ENCODE measurements at regions of chr3 and their contacts with region 1.

Region 1: GRCh38 chr3:187139126-187139894 is at the start of gene RPL39L:
- DNase-seq: peak; percentile 92
- H3K4me3 Mint-ChIP-seq: peak within 1 kb of the TSS; percentile 82
- H3K27ac Mint-ChIP-seq: peak within 1 kb of the TSS; percentile 96
- H3K4me1 Mint-ChIP-seq: peaks cover 26% of the 10 kb centered on the region
- H3K27me3 Mint-ChIP-seq: no peaks in the 10 kb centered on the region
- total RNA-seq, gene RPL39L: 18.4 to 20.4 TPM

Region 2: DNA sequence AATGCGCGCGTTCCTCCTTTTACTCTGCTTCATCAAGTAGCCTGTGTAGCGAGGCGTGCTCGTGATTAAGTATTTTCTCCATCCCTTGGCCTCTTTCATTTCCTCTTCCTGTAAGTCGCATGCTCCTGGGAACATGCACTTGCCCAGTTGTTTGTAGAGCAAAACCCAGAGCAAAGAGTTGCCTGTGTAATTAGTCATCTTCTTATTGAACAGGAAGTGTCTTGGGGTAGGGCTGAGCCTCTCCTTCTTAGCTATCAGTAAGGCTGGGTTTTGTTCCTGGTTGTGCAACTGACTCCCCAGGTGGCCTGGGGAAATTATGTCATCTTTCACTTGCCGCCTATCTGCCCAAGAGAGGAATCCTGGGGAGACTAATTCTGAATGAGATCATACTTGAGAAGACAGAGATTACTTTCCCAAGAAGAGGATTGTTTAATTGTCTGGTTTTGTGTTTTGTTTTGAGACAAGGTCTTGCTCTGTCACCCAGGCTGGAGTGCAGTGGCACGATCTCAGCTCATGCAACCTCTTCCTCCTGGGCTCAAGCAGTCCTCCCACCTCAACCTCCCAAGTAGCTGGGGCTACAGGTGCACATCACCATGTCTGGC is 1601.8 kb before region 1 on chr3:
- CTCF ChIA-PET with region 1: no interaction called
- POLR2A ChIA-PET with region 1: no interaction called
- DNase-seq: peak; percentile 40
- H3K4me3 Mint-ChIP-seq: peak overlapping the region; percentile 1
- H3K27ac Mint-ChIP-seq: peak overlapping the region; percentile 85
- H3K4me1 Mint-ChIP-seq: peaks cover 16% of the 10 kb centered on the region
- H3K27me3 Mint-ChIP-seq: no peaks in the 10 kb centered on the region

Region 3: DNA sequence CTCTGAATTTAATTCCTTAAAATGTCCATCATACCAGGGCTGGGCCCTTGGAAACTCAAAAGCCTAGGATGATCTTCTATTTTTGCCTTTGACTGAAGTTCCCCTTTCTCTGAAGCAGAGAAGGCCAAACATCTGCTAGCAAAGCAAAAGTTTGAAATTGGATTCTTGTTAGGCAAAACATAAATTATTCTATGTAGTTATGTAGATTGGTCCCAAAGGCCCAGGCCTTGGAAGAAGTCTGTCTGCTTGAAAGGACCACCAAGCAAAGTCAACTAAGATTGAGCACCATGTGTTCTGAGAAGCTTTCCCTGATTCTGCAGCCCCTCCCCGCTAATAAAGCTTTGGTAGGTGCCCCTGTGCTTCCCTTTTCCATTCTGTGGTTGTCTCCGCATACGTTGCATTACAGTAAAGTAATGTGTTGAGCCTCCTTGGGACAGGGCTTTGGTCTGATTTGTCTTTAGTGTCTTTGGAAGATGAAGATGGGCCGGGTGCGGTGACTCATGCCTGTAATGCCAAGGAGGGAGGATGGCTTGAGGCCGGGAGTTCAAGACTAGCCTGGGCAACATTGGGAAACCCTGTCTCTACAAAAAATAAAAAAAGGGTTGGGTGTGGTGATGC is 56.4 kb before region 1 on chr3:
- CTCF ChIA-PET with region 1: no interaction called
- POLR2A ChIA-PET with region 1: no interaction called
- DNase-seq: no peak
- H3K4me3 Mint-ChIP-seq: no peak overlapping the region
- H3K27ac Mint-ChIP-seq: no peak overlapping the region
- H3K4me1 Mint-ChIP-seq: peaks cover 17% of the 10 kb centered on the region
- H3K27me3 Mint-ChIP-seq: peaks cover 1% of the 10 kb centered on the region

Region 4: GRCh38 chr3:187104933-187105332 is 34.4 kb before region 1 on chr3:
- CTCF ChIA-PET with region 1: interaction called, 11 read pairs
- POLR2A ChIA-PET with region 1: no interaction called
- DNase-seq: no peak
- H3K4me3 Mint-ChIP-seq: no peak overlapping the region
- H3K27ac Mint-ChIP-seq: no peak overlapping the region
- H3K4me1 Mint-ChIP-seq: peaks cover 24% of the 10 kb centered on the region
- H3K27me3 Mint-ChIP-seq: no peaks in the 10 kb centered on the region

Region 5: GRCh38 chr3:187336322-187336721 is 197.0 kb after region 1 on chr3:
- CTCF ChIA-PET with region 1: no interaction called
- POLR2A ChIA-PET with region 1: no interaction called
- DNase-seq: no peak
- H3K4me3 Mint-ChIP-seq: no peak overlapping the region
- H3K27ac Mint-ChIP-seq: no peak overlapping the region
- H3K4me1 Mint-ChIP-seq: no peaks in the 10 kb centered on the region
- H3K27me3 Mint-ChIP-seq: peaks cover 18% of the 10 kb centered on the region

Region 6: GRCh38 chr3:187456250-187456649 is 316.9 kb after region 1 on chr3:
- CTCF ChIA-PET with region 1: no interaction called
- POLR2A ChIA-PET with region 1: no interaction called
- DNase-seq: no peak
- H3K4me3 Mint-ChIP-seq: no peak overlapping the region
- H3K27ac Mint-ChIP-seq: no peak overlapping the region
- H3K4me1 Mint-ChIP-seq: no peaks in the 10 kb centered on the region
- H3K27me3 Mint-ChIP-seq: peaks cover 11% of the 10 kb centered on the region